Activated CD4-positive, alpha-beta memory T cell treated with anti-CD3 and anti-CD28 coated beads for 36 hours (primary cell): ENCODE measurements at regions of chr2 and their contacts with region 1.

Region 1: DNA sequence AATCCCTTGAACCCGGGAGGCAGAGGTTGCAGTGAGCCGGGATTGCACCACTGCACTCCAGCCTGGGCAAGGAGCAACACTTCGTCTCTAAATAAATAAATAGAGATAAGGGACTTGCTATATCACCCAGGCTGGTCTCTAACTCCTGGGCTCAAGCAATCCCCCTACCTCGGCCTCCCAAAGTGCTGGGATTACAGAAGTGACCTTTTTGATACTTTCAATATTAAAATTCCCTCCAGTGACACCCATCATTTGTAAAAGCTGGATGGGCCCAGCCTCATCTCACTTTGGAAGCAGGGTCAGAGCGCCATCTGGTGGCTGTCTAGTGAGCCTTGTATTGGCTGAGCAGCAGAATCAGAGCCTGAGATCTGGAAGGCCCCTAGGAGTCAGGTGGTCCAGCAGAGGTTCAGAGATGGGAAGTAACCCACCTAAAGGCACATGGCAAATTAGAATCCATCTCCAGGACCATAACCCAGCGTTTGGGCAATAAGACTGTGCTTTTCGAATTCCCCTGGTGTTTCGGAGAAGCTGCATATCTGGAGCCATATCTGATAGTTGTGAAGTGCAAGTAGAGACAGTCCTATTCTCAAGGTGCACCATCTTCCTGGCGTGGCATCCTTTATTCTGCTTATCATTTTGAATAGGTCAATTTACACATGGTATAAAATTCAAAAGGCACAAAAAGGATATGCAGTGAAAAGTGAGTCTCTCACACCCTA is 18.3 kb upstream of the SLC35F6 start:
- DNase-seq: peak; percentile 86
- H3K4me3 Mint-ChIP-seq: no peak overlapping the region
- H3K27ac Mint-ChIP-seq: no peak overlapping the region
- H3K4me1 Mint-ChIP-seq: no peaks in the 10 kb centered on the region
- H3K27me3 Mint-ChIP-seq: no peaks in the 10 kb centered on the region

Region 2: DNA sequence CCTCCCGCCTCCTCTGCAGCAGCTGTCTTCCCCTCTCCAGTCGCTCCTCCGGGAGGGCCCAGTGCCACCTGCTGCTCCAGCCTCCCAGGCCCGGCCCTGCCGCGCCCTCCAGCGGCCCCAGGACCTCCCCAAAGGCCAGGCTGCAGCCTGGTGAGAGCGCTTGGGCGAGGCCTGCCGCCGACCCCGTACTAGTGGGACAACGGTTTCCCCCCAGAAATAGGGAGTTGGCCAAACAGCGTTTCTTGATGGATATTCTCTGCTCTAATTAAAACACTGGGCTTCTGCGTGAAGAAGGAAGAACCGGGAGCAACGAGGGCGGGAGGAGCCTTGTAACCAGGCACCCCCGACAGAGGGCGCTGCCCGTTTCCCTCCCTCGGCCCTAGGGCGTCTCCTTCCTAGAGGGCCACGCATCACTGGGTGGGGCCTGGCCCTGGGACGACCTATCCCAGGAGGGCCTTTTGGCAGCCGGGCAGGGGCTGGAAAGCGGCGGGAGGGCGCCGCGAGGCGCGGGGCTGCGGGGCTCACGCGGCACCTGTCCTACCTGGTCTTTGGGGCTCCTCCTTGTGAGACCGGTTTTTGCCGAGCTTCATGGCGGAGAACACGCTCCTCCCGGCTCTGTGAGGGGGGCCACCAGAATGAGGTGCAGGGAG is 242.4 kb before region 1 on chr2:
- CTCF ChIA-PET with region 1: interaction called, 4 read pairs
- POLR2A ChIA-PET with region 1: no interaction called
- intact Hi-C with region 1: loop called (anchors 5 kb)
- DNase-seq: peak; percentile 91
- H3K4me3 Mint-ChIP-seq: peak overlapping the region; percentile 60
- H3K27ac Mint-ChIP-seq: no peak overlapping the region
- H3K4me1 Mint-ChIP-seq: peaks cover 5% of the 10 kb centered on the region
- H3K27me3 Mint-ChIP-seq: peaks cover 3% of the 10 kb centered on the region

Region 3: DNA sequence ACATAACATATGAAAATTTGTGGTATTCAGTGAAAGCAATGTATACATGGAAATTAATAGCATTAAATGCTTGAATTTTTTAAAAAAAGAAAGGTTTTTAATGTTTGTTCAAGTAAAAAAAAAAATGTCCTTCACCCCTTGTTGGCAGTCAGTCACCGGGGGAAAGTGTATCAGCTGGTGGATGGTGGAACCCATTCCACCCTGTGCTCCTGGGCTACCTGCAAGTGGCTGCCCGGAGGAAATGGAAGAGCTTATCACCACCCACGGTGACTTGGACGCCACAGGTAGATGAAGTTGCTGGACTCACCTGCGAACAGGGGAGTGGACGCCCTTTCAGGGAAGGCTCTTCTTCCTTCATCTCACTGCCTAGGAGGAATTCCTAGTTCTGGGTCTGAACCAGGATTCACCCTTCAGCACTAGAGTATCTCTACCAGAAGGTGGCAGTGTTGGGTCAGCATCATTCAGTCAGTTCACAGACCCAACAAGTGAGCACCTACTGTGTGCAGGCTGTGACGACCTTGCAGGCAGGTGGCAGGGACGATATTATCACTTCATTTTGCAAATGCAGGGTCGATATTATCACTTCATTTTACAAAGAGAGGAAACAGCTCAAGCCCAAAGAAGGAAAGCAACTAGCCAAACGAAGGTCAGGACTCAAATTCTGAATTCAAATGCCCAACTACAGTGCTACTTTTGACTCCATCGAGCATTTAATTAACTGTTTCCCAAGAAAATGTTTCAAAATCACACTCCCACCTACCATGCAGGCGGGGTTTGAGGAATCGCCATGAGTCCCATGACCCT is 140.4 kb before region 1 on chr2:
- CTCF ChIA-PET with region 1: interaction called, 146 read pairs
- POLR2A ChIA-PET with region 1: no interaction called
- intact Hi-C with region 1: loop called (anchors 1 kb)
- DNase-seq: peak; percentile 25
- H3K4me3 Mint-ChIP-seq: no peak overlapping the region
- H3K27ac Mint-ChIP-seq: no peak overlapping the region
- H3K4me1 Mint-ChIP-seq: no peaks in the 10 kb centered on the region
- H3K27me3 Mint-ChIP-seq: peaks cover 18% of the 10 kb centered on the region